ENCODE measurements at regions of chr20 and their contacts with region 1.

Region 1: DNA sequence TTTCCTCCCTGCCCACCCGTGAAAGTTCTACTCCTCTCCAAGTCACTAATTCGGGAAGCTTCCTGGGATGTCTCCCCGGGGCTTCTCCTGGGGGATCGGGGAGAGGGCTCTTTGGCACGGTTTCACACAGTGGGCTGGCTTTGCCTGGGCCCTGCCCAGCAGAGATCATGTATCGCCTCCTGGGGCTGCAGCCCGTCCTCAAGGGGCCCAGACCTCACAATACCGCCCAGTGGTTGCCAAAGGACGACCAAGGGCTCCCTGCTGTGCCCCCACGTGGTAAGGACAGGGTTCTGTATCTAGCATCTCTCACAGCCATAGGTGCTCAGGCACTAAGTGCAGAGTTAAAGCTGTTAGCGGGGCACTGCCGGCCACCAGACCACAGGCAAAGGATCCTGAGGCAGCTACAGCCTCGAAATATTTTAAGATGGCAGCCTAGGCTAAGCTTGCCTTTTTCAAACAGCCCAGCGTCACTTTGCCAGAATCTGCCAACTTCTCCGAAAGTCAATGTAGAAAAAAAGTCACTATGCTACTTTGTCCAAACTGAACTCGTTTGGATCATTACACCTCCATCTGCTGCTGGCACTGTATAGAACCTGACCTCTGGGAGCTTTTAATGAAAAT is 1.4 kb upstream of the NNAT start:
- DNase-seq: no peak
- ATAC-seq: peak; percentile 60 to 73 (median 67)
- H3K4me3 ChIP-seq: peak overlapping the region in 1 of 3 donors; percentile 26
- H3K27ac ChIP-seq: peak overlapping the region in 1 of 3 donors; percentile 56
- H3K4me1 ChIP-seq: peaks cover 0 to 35% (median 15%) of the 10 kb centered on the region in 4 donors
- H3K27me3 ChIP-seq: no peaks in the 10 kb centered on the region
- CTCF ChIP-seq: peak in 2 of 4 donors; percentile 10 to 25
- POLR2A ChIP-seq: no peak

Region 2: GRCh38 chr20:37457921-37458320 is 61.7 kb before region 1 on chr20:
- intact Hi-C with region 1: loop called in 1 of 2 experiments (anchors 10 kb)
- DNase-seq: no peak
- ATAC-seq: no peak
- H3K4me3 ChIP-seq: no peak overlapping the region
- H3K27ac ChIP-seq: no peak overlapping the region
- H3K4me1 ChIP-seq: no peaks in the 10 kb centered on the region
- H3K27me3 ChIP-seq: no peaks in the 10 kb centered on the region
- CTCF ChIP-seq: no peak
- POLR2A ChIP-seq: no peak